Transverse colon (tissue), 4 donors: ENCODE measurements at regions of chr21 and their contacts with region 1.

Region 1: DNA sequence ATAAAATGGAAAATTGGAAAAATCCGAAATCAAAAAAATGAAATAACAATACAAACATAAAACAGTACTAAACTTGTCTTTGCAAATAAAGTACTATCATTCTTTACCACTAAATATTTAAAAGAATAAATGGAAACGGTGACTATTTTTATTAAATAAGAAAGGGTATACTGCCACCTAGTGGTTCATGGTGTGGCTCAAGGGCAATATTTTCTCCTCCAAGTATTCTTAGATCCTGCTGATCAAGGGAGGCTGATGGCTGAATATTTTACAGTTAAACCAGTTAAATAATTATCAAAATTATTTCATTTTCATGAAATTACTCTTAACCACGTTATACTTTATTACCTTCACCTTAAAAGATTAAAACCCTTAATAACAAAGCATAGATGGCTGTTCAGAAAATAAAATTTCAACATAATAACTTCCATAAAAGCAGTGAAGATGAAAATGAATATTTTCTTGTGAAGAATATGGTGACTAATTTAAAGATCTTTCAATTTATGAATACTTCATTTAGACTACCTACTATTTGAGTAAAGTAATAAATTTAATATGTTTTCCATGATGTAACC is 1793.9 kb downstream of the NCAM2 start:
- DNase-seq: no peak
- H3K4me3 ChIP-seq: no peak overlapping the region
- H3K27ac ChIP-seq: no peak overlapping the region
- H3K4me1 ChIP-seq: no peaks in the 10 kb centered on the region
- H3K27me3 ChIP-seq: no peaks in the 10 kb centered on the region
- CTCF ChIP-seq: peak; percentile 60 to 79 (median 76)
- EP300 ChIP-seq: no peak
- POLR2A ChIP-seq: no peak

Region 2: GRCh38 chr21:20999659-21000058 is 1792.4 kb before region 1 on chr21:
- in situ Hi-C with region 1: loop called in 2 of 4 experiments (anchors 25 kb)
- intact Hi-C with region 1: no loop called
- DNase-seq: peak; percentile 16
- H3K4me3 ChIP-seq: no peak overlapping the region
- H3K27ac ChIP-seq: no peak overlapping the region
- H3K4me1 ChIP-seq: peaks cover 3 to 24% (median 13%) of the 10 kb centered on the region in 4 donors
- H3K27me3 ChIP-seq: peaks cover 27% of the 10 kb centered on the region
- CTCF ChIP-seq: peak; percentile 53 to 78 (median 70)
- EP300 ChIP-seq: no peak
- POLR2A ChIP-seq: no peak

Region 3: GRCh38 chr21:21163904-21164303 is 1628.2 kb before region 1 on chr21:
- in situ Hi-C with region 1: loop called in 3 of 4 experiments (anchors 10 to 25 kb)
- intact Hi-C with region 1: no loop called
- DNase-seq: peak; percentile 40
- H3K4me3 ChIP-seq: no peak overlapping the region
- H3K27ac ChIP-seq: no peak overlapping the region
- H3K4me1 ChIP-seq: peaks cover 0 to 20% (median 0%) of the 10 kb centered on the region in 4 donors
- H3K27me3 ChIP-seq: no peaks in the 10 kb centered on the region
- CTCF ChIP-seq: peak; percentile 53 to 68 (median 59)
- EP300 ChIP-seq: no peak
- POLR2A ChIP-seq: no peak

Region 4: GRCh38 chr21:22456241-22456640 is 335.8 kb before region 1 on chr21:
- in situ Hi-C with region 1: no loop called
- intact Hi-C with region 1: no loop called
- DNase-seq: no peak
- H3K4me3 ChIP-seq: no peak overlapping the region
- H3K27ac ChIP-seq: no peak overlapping the region
- H3K4me1 ChIP-seq: no peaks in the 10 kb centered on the region
- H3K27me3 ChIP-seq: no peaks in the 10 kb centered on the region
- CTCF ChIP-seq: no peak
- EP300 ChIP-seq: no peak
- POLR2A ChIP-seq: no peak